ENCODE measurements at regions of chr17 and their contacts with region 1.

Region 1: DNA sequence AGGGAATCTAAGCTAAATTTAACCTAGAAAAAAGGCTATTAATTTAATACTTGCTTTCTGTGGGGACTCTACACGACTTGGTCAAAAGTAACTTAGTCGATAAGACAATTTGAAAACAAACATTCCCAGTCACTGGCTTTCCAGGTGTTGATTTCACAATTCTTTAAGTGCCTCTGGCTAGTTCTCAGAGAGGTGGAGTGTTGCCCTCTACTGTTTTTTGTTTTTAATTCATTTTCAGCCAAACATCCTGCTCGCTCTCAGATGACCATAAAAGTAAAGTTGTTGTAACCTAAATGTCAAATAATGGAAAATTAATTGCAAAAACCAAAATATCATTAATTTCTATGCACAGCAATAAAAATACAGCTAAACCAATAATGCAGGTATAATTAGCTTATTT is 107.1 kb downstream of the MYO1D start:
- DNase-seq: no peak
- CTCF ChIP-seq: no peak

Region 2: DNA sequence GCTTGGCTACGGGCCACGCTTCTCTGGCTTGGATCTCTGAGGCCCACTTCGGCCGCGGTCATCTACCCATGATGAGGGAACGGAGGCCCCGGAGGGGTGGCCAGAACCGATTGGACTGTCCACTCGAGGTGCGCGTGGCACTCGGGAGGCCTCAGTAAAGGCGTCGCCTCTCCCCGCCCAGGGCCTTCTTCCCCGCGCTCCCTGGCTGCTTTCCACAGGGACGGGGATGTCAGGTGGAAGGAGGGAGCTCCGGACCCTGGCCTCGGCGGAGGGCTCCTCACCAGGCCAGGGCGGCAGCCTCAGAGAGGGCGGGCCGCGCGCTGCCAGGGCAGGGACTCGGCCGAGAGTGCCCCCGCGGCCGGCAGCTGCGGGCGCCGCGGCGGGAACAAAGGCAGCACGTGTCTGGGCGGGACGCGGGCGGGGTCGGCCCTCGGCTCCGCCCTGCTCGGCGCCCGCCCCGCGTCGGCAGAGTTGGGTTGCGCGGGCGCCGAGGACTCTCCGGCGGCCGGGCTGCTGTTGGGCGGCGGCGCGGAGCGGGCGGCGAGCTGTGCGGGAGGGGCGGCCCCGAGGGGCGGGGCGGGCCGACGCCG is 283.6 kb before region 1 on chr17:
- in situ Hi-C with region 1: loop called (anchors 10 kb)
- DNase-seq: peak; percentile 93
- CTCF ChIP-seq: no peak

Measured in GM13976 (cell line).